ENCODE measurements at regions of chr10 and their contacts with region 1.

Region 1: DNA sequence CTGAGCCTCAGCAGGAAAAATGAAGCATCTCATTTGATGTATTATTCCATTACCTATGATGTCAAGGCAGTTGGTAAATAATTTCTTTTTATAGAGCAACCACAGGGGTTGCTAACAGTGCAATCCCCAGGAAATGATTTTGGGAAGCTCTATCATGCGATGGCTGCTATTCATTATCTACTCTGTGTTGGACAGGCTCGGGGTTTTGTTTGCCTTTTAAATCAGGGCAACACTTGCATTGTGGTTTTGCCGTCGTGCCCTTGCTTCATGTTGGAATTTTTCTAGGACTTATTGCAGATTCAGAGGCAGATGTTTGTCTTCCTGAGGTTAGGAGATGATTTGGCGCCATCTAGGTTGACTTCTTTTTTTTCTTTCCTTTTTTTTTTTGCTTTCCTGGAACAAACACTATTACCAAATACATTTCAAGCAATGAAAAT is 128.4 kb downstream of the BICC1 start:
- DNase-seq: no peak
- H3K4me3 ChIP-seq: no peak overlapping the region
- H3K27ac ChIP-seq: no peak overlapping the region
- H3K4me1 ChIP-seq: no peaks in the 10 kb centered on the region
- H3K27me3 ChIP-seq: no peaks in the 10 kb centered on the region
- CTCF ChIP-seq: no peak

Region 2: DNA sequence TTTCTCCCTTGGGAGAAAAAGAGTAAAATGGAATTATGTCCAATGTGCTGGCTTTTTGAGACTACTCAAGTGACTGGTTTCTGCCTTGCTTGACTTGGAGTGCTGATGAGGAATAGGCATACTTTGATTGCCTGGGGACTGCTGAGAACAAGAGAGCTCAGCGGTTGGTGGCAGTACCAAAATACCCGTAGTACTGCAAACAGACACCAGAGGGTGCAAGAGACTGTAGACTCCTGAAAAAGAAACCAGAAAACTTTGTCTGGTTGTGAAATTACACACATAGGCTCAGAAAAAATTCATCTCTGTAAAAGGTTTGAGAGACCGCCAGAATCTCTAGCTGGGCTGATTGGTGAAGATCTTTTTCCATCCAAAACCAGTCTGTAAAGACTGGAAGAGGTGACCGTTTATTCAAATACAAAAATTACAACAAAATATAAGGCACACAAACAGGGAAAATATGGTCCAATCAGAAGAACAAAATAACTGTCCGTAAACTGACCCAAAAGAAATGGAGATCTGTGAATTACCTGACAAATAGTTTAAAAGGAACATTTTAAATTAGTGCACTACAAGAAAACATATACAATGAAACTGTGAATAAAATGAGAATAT is 109.9 kb before region 1 on chr10:
- intact Hi-C with region 1: loop called (anchors 5 kb)
- DNase-seq: peak; percentile 66
- H3K4me3 ChIP-seq: no peak overlapping the region
- H3K27ac ChIP-seq: no peak overlapping the region
- H3K4me1 ChIP-seq: no peaks in the 10 kb centered on the region
- H3K27me3 ChIP-seq: no peaks in the 10 kb centered on the region
- CTCF ChIP-seq: peak; percentile 80

Measured in colonic mucosa (tissue), 4 donors.